ENCODE measurements at regions of chr10 and their contacts with region 1.

Region 1: DNA sequence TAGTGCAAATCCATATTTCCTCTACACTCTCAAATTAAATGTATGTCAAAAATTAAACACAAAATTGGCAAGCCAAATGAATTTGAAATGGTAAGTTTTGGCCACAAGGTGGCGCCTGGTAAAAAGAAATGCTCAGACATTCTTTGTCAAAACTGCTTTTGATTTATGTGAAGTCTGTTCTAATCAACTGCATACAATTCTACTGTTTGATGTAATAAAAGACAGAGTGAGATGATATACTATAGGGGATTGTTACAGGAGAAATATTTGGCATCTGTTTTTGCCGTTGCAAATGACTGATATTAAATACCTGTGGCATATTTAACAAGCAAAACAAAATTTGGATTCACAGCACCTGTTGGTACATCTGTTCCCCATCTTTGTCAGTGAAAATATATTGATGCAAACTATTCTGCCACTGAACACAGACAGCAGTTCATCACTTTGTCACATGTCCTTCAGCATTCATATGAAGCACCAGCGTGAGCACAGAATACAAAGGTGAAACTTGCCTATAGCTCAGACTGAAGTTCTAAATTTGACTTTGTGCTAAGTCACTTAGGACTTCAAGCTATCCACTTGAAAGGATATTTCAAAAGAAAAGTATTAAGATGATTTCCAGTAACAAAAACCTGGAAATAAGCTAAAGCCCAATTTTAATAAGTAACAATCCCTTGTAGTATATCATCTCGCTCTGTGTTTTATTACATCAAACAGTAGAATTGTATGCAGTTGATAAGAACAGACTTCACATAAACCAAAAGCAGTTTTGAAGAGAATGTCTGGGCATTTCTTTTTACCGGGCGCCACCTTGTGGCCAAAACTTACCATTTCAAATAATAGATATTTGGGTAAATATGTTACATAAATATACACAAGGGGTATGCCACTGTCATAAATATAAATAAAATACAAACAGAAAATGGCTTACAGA is 10.2 kb upstream of the CH25H start:
- DNase-seq: peak; percentile 81
- H3K4me3 Mint-ChIP-seq: no peak overlapping the region
- H3K27ac Mint-ChIP-seq: no peak overlapping the region
- H3K4me1 Mint-ChIP-seq: peaks cover 7% of the 10 kb centered on the region
- H3K27me3 Mint-ChIP-seq: peaks cover 2% of the 10 kb centered on the region

Region 2: GRCh38 chr10:89022734-89023133 is 194.6 kb before region 1 on chr10:
- CTCF ChIA-PET with region 1: interaction called, 26 read pairs
- intact Hi-C with region 1: no loop called
- DNase-seq: no peak
- H3K4me3 Mint-ChIP-seq: no peak overlapping the region
- H3K27ac Mint-ChIP-seq: no peak overlapping the region
- H3K4me1 Mint-ChIP-seq: no peaks in the 10 kb centered on the region
- H3K27me3 Mint-ChIP-seq: no peaks in the 10 kb centered on the region

Region 3: GRCh38 chr10:89207181-89207800 is 10.0 kb before region 1 on chr10 and contains the start of gene CH25H:
- CTCF ChIA-PET with region 1: interaction called, 23 read pairs
- intact Hi-C with region 1: no loop called
- DNase-seq: peak; percentile 79
- H3K4me3 Mint-ChIP-seq: peak within 1 kb of the TSS; percentile 75
- H3K27ac Mint-ChIP-seq: no peak within 1 kb of the TSS
- H3K4me1 Mint-ChIP-seq: peaks cover 7% of the 10 kb centered on the region
- H3K27me3 Mint-ChIP-seq: peaks cover 39% of the 10 kb centered on the region
- total RNA-seq, gene CH25H: 0.12 to 0.22 TPM

Region 4: GRCh38 chr10:89242840-89243568 is 25.7 kb after region 1 on chr10:
- CTCF ChIA-PET with region 1: interaction called, 12 read pairs
- intact Hi-C with region 1: no loop called
- DNase-seq: no peak
- H3K4me3 Mint-ChIP-seq: no peak overlapping the region
- H3K27ac Mint-ChIP-seq: no peak overlapping the region
- H3K4me1 Mint-ChIP-seq: peaks cover 2% of the 10 kb centered on the region
- H3K27me3 Mint-ChIP-seq: no peaks in the 10 kb centered on the region

Region 5: DNA sequence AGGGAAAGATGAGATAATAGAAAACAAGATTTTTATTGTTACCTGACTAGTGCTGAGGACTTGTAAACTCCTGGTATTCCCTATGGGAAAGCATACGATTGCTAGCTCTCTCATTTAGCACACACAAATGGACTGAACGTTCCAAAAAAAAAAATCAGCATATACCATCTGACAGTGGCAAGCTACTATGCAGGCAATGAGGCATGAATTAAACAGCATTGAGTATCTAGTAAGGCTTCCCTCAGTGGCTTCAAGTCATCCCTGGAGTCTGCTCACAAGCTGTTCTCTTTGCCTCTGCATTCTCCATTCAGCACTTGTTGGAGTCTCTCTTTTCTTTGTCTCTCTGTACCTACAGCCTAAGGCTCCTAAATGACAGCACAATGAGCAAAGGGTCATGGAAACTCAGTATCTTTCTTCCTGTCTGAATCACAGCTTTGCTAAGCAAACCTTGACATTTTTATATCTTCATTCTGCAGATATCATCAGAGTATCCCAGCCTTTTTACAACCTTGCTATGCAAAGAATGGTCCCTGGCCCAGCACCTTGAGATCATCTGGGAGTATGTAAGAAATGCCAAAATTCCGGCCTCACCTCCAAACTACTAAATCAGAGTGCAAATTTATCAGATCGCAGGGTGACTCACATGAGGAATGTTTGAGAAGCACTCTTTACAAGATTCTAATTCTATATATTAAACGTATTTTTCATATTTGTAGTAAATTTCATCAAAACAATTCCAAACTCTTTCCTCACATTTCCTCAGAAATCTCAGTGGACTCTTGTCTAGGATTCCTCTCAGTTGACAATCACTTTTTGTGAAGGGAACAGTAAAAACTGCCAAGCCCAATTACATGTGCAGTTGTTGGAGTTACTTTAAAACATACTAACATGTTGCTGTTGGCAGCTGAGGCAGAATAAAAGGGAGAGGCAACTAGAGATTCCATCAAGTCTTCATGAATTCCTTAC is 45.0 kb after region 1 on chr10:
- CTCF ChIA-PET with region 1: no interaction called
- intact Hi-C with region 1: no loop called
- DNase-seq: no peak
- H3K4me3 Mint-ChIP-seq: no peak overlapping the region
- H3K27ac Mint-ChIP-seq: no peak overlapping the region
- H3K4me1 Mint-ChIP-seq: peaks cover 5% of the 10 kb centered on the region
- H3K27me3 Mint-ChIP-seq: peaks cover 1% of the 10 kb centered on the region

Region 6: GRCh38 chr10:89391917-89392756 is 174.8 kb after region 1 on chr10 and contains the start of gene IFIT1:
- CTCF ChIA-PET with region 1: interaction called, 6 read pairs
- intact Hi-C with region 1: loop called (anchors 1 kb)
- DNase-seq: peak; percentile 52
- H3K4me3 Mint-ChIP-seq: peak within 1 kb of the TSS; percentile 73
- H3K27ac Mint-ChIP-seq: peak within 1 kb of the TSS; percentile 70
- H3K4me1 Mint-ChIP-seq: peaks cover 30% of the 10 kb centered on the region
- H3K27me3 Mint-ChIP-seq: no peaks in the 10 kb centered on the region
- total RNA-seq, gene IFIT1: 5.9 to 6.0 TPM